ENCODE measurements at regions of chr20 and their contacts with region 1.

Region 1: GRCh38 chr20:41738604-41739206 is 120.5 kb upstream of the CHD6 start:
- DNase-seq: no peak
- H3K4me3 ChIP-seq: no peak overlapping the region
- CTCF ChIP-seq: peak; percentile 83

Region 2: DNA sequence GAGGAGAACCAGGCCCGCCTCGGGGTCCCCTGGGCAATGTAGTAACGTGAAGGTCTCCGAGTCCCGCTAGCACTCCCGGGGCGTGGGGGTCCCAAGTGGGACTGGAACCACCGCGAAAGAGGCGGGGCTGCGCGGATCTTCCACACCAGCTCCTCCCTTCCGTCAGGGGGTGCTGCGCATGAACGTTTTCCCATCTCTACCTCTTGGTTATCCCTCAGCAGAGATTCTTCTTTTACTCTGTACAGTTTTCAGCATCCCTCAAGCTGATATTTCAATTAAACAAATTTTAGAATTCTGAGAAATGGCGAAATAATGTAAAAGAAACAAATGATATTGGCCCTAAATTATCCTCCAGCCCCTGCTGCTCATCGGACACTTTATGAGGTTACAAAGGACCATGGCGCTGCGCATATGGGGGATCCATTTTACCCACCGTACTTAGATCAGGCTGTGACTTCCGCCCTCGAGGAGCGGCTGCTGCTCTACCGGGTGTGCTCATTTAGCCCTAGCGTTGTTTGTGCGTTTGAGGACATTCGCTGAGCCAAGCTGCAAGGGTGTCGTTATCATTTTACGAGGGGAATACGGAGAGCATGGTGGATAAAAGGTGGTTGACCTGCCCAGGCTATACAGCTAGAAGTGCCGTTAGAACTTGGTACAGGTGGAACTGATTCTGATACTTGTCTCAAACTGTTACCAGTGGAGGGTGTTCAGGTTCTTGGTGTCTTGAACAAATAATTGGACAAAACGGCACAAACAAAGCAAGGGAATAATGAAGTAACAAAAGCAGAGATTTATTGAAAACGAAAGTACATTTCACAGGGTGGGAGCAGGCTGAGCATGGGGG is 45.3 kb before region 1 on chr20:
- CTCF ChIA-PET with region 1: interaction called, 23 read pairs
- POLR2A ChIA-PET with region 1: no interaction called
- DNase-seq: peak; percentile 29
- H3K4me3 ChIP-seq: peak overlapping the region; percentile 80
- CTCF ChIP-seq: peak; percentile 36

Region 3: GRCh38 chr20:41717483-41717882 is 21.2 kb before region 1 on chr20:
- CTCF ChIA-PET with region 1: interaction called, 43 read pairs
- POLR2A ChIA-PET with region 1: no interaction called
- DNase-seq: no peak
- H3K4me3 ChIP-seq: no peak overlapping the region
- CTCF ChIP-seq: no peak

Region 4: DNA sequence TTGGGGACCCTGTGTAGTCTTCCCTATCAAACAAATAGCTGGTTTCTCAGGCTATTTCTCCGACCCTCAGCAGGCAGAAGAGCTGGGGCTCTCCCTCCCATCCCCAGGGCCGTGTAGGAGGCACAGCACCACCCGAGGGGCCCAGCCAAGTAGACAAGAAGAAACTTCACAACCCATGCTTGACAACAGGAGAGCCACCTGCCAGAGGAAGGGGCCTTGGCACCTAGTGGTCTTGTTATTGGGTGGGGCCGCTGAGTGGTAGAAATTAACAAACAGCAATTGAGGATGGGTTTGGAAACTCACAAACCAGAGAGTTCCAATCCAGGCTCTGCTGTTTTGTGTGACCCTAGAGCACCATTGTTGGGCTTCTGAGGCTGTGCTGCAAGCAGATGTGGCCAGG is 12.0 kb before region 1 on chr20:
- CTCF ChIA-PET with region 1: interaction called, 43 read pairs
- POLR2A ChIA-PET with region 1: no interaction called
- DNase-seq: no peak
- H3K4me3 ChIP-seq: no peak overlapping the region
- CTCF ChIP-seq: no peak

Region 5: DNA sequence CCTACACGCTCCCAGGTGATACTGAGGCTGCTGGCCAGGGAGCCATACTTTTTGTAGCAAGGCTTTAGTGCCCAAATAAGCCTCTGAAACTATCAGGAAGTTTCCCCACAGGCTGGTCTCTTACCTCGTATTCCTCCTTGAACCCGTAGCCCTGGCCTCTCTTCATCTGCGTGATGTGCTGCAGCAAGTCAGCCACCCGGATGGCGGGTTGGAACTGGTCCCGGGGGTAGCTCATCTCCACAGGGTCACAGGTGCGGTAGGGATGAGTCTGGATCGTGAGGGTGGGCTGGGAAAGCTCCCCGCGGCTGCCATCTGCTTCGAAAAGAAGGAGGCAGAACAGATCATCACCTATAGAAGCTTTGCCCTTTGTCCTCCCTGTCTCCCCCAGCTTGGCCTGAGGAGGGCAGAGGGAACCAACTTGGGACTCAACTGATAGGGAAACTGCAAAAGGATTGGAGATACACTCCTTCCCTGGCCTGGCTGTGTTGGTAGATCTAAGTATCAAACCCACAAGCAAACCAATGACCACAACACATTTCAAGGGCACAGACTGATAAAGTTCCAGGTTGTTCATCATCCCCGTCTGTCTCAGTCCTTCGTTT is 422.6 kb after region 1 on chr20:
- CTCF ChIA-PET with region 1: no interaction called
- POLR2A ChIA-PET with region 1: no interaction called
- DNase-seq: no peak
- H3K4me3 ChIP-seq: no peak overlapping the region
- CTCF ChIP-seq: no peak

Region 6: GRCh38 chr20:43187476-43188233 is 1449.0 kb after region 1 on chr20:
- CTCF ChIA-PET with region 1: interaction called, 36 read pairs
- POLR2A ChIA-PET with region 1: no interaction called
- DNase-seq: peak; percentile 9
- H3K4me3 ChIP-seq: no peak overlapping the region
- CTCF ChIP-seq: peak; percentile 82

Region 7: GRCh38 chr20:43408848-43409576 is 1670.3 kb after region 1 on chr20:
- CTCF ChIA-PET with region 1: interaction called, 52 read pairs
- POLR2A ChIA-PET with region 1: no interaction called
- DNase-seq: no peak
- H3K4me3 ChIP-seq: no peak overlapping the region
- CTCF ChIP-seq: peak; percentile 68